Common myeloid progenitor, CD34-positive (primary cell): ENCODE measurements at regions of chr5 and their contacts with region 1.

Region 1: GRCh38 chr5:142807372-142807911 is 37.3 kb downstream of the ARHGAP26 start:
- DNase-seq: no peak
- H3K4me3 ChIP-seq: no peak overlapping the region
- H3K27ac ChIP-seq: no peak overlapping the region
- H3K4me1 ChIP-seq: peaks cover 8 to 25% (median 10%) of the 10 kb centered on the region in 4 experiments
- H3K27me3 ChIP-seq: no peaks in the 10 kb centered on the region

Region 2: GRCh38 chr5:142821733-142822487 is 14.5 kb after region 1 on chr5:
- CTCF ChIA-PET with region 1: interaction called, 10 read pairs
- POLR2A ChIA-PET with region 1: no interaction called
- DNase-seq: peak in 2 of 3 donors; percentile 75 to 78
- H3K4me3 ChIP-seq: no peak overlapping the region
- H3K27ac ChIP-seq: no peak overlapping the region
- H3K4me1 ChIP-seq: peaks cover 0 to 10% (median 3%) of the 10 kb centered on the region in 4 experiments
- H3K27me3 ChIP-seq: no peaks in the 10 kb centered on the region